AG04449 (cell line): ENCODE measurements at regions of chr12 and their contacts with region 1.

Region 1: GRCh38 chr12:109518820-109519665 is 41.6 kb downstream of the UBE3B start:
- DNase-seq: peak; percentile 67
- H3K4me3 ChIP-seq: no peak overlapping the region
- CTCF ChIP-seq: peak; percentile 77

Region 2: GRCh38 chr12:109458771-109459208 is 60.3 kb before region 1 on chr12:
- CTCF ChIA-PET with region 1: no interaction called
- POLR2A ChIA-PET with region 1: no interaction called
- DNase-seq: no peak
- H3K4me3 ChIP-seq: no peak overlapping the region
- CTCF ChIP-seq: no peak

Region 3: DNA sequence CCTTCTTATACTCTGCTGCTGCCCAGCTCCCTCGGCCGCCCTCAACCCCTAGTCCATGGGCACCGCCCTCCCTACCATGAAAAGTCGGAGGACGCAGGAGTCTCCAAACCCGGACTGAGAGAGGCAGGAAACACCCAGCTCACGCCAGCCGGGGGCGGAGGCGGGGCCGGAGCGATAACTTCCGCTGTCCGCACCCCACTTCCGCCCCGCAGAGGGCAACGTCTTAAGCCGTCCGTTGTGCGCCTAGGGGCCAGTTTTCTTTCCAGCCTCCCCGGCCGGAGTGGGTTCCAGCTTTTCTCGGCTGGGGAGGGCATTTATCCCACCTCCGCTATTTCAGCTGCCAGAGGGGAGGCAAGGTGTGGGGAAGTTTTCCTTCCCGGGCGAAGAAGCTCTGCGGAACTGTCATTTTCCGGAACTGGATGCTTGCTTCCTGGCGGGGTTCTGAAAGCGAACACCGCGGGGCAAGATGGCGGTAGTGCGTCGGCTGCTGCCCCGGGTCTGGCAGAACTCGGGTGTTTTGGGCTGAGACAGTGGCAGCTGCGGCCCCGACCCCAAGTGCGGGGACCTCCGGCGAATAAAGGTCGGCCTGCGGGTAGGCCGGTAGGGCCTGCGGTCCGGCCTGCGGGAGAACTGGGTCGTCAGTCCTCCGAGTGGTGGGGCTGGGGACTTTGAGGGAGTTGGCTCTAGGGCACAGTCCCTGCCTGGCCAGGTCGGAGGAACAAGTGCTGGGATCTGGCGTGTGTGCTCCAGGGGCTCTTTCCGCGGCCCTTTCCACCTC is 41.7 kb before region 1 on chr12 and contains the starts of genes KCTD10 and UBE3B:
- CTCF ChIA-PET with region 1: interaction called, 12 read pairs
- POLR2A ChIA-PET with region 1: no interaction called
- DNase-seq: no peak
- H3K4me3 ChIP-seq: peak within 1 kb of the TSS; percentile 95
- CTCF ChIP-seq: no peak

Region 4: DNA sequence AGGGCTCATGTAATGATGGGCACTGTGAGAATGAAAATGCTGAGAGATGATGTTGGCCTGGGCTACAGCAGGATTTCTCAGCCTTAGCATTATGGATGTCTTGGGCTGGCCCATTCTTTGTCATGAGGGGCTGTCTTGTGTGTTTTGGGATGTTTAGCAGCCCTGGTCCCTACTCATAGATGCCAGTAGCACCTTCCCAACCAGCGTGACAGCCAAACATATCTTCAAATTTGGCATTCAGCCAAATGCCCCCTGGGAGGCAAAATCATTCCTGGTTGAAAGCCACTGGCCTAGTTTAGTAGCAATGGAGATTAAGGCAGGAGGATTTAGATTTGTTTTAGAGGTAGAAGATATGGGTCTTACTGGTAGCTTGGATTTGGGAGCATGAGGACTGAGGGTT is 15.0 kb before region 1 on chr12:
- CTCF ChIA-PET with region 1: interaction called, 51 read pairs
- POLR2A ChIA-PET with region 1: no interaction called
- DNase-seq: no peak
- H3K4me3 ChIP-seq: no peak overlapping the region
- CTCF ChIP-seq: no peak

Region 5: DNA sequence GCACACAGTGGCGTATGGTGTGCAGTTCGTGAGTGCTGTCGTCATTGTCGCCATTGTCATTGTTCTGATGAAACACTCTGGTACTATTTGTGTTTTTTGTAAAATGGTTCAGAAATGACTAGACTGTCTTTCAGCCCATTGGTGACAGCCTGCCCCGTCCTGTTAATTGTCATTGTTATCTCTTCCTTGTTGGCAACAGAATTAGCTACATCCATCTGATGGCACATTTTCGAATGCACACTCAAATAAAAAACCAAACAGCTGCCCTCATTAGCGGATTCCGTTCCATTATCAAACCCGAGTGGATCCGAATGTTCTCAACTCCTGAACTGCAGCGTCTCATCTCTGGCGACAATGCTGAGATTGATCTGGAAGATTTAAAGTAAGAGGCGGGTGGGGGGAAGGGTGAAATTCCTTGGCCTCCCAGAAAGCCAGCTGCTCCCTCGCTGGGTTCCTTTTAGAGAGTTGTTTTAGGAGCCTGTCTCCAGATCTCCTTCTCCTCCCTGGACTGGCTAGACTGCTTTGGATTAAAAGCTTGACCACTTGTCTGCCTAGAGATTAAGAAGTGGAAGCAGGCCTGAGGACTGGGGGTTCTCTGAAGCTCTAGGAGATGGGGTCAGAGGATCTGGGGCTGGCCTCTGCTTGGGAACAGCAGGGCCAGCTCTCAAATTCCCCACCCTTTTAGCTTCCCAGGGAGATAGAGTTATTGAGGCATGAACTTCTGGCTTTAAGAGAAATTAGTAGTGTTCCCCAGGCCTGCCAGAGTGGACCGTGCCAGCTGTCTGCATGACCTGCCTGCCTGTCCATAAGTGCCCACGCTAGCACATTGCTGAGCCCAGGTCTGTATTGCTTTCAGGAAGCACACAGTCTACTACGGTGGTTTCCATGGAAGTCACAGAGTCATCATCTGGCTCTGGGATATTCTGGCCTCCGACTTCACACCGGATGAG is 10.9 kb after region 1 on chr12:
- CTCF ChIA-PET with region 1: interaction called, 11 read pairs
- POLR2A ChIA-PET with region 1: no interaction called
- DNase-seq: no peak
- H3K4me3 ChIP-seq: no peak overlapping the region
- CTCF ChIP-seq: no peak

Region 6: GRCh38 chr12:109775172-109775881 is 256.3 kb after region 1 on chr12:
- CTCF ChIA-PET with region 1: interaction called, 204 read pairs
- POLR2A ChIA-PET with region 1: no interaction called
- DNase-seq: no peak
- H3K4me3 ChIP-seq: no peak overlapping the region
- CTCF ChIP-seq: peak; percentile 91